Heart right ventricle (tissue), 16 donors: ENCODE measurements at regions of chr4 and their contacts with region 1.

Region 1: GRCh38 chr4:189436207-189436606 is 504.5 kb upstream of the FRG1 start:
- DNase-seq: no peak
- ATAC-seq: no peak
- H3K4me3 ChIP-seq: no peak overlapping the region
- H3K27ac ChIP-seq: no peak overlapping the region
- H3K4me1 ChIP-seq: no peaks in the 10 kb centered on the region
- H3K27me3 ChIP-seq: peaks cover 0 to 5% (median 0%) of the 10 kb centered on the region in 7 donors
- CTCF ChIP-seq: peak in 4 of 9 donors; percentile 20 to 38 (median 26)

Region 2: GRCh38 chr4:189147005-189147929 is 288.9 kb before region 1 on chr4:
- intact Hi-C with region 1: no loop called
- DNase-seq: no peak
- ATAC-seq: no peak
- H3K4me3 ChIP-seq: no peak overlapping the region
- H3K27ac ChIP-seq: no peak overlapping the region
- H3K4me1 ChIP-seq: no peaks in the 10 kb centered on the region
- H3K27me3 ChIP-seq: no peaks in the 10 kb centered on the region
- CTCF ChIP-seq: no peak

Region 3: GRCh38 chr4:189787216-189788031 is 351.2 kb after region 1 on chr4:
- intact Hi-C with region 1: loop called in 5 of 10 experiments (anchors 10 kb)
- DNase-seq: no peak
- ATAC-seq: no peak
- H3K4me3 ChIP-seq: no peak overlapping the region
- H3K27ac ChIP-seq: no peak overlapping the region
- H3K4me1 ChIP-seq: no peaks in the 10 kb centered on the region
- H3K27me3 ChIP-seq: peaks cover 0 to 4% (median 0%) of the 10 kb centered on the region in 7 donors
- CTCF ChIP-seq: no peak

Region 4: DNA sequence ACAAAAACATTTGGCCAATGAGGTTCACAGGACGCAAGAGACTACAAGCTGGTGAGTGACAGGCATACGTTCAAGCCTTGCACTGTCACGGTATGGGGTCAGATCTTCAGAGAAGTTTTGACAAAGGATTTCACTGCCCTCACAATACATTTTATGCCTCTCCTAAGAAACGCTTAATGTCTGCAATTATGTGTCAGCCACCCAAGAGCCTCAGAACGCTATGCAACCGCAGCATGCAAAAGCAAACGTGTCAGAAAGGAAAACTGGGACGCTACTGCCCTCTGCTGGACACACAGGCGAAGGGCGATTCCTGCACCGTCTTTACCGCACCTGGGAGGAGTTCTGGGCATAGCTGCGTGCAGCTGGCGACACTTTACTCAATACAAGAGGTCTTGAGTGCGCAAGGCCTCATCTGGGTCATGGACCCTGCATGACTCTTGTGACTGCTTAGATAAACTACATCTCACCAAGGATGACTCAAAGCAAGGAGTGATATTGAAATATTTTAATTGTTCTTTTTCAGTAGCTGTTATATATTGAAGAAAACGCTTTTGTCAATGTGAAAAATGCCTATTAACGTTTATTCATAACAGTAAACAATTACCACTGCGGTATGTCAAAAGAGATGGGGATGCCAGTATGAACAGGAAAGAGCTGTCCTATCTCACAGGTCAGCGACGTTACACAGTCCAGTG is 356.9 kb after region 1 on chr4:
- intact Hi-C with region 1: loop called in 5 of 10 experiments (anchors 10 kb)
- DNase-seq: peak; percentile 61 to 64
- ATAC-seq: peak; percentile 61 to 93 (median 86)
- H3K4me3 ChIP-seq: peak overlapping the region in 7 of 10 donors; percentile 1 to 34 (median 19)
- H3K27ac ChIP-seq: no peak overlapping the region
- H3K4me1 ChIP-seq: peaks cover 0 to 8% (median 4%) of the 10 kb centered on the region in 9 donors
- H3K27me3 ChIP-seq: no peaks in the 10 kb centered on the region
- CTCF ChIP-seq: peak; percentile 86 to 97 (median 93)